ENCODE measurements at regions of chr9 and their contacts with region 1.

Region 1: DNA sequence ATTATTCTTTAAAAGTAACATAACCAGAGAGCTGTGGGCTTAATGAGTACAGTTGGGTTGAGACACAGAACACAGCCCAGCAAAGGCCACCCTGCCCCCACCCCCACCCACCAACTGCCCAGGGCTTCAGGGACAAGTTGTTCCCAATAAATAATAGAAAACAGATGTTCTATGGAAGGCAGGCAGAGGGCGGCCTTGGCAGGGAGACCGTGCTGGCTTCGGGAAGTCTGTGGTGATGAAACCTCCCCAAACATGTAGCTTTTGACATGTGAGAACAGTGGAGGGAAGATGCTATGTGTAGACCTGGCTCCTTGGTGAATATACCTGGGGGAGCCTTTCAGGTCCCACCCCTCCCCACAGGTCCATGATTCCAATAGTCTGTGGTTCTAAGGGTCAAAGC is 10.0 kb downstream of the TRAF1 start:
- DNase-seq: no peak
- ATAC-seq: no peak
- H3K4me3 Mint-ChIP-seq: peak overlapping the region; percentile 34
- H3K27ac Mint-ChIP-seq: peak overlapping the region; percentile 80
- H3K4me1 Mint-ChIP-seq: peaks cover 86% of the 10 kb centered on the region
- H3K27me3 Mint-ChIP-seq: no peaks in the 10 kb centered on the region

Region 2: DNA sequence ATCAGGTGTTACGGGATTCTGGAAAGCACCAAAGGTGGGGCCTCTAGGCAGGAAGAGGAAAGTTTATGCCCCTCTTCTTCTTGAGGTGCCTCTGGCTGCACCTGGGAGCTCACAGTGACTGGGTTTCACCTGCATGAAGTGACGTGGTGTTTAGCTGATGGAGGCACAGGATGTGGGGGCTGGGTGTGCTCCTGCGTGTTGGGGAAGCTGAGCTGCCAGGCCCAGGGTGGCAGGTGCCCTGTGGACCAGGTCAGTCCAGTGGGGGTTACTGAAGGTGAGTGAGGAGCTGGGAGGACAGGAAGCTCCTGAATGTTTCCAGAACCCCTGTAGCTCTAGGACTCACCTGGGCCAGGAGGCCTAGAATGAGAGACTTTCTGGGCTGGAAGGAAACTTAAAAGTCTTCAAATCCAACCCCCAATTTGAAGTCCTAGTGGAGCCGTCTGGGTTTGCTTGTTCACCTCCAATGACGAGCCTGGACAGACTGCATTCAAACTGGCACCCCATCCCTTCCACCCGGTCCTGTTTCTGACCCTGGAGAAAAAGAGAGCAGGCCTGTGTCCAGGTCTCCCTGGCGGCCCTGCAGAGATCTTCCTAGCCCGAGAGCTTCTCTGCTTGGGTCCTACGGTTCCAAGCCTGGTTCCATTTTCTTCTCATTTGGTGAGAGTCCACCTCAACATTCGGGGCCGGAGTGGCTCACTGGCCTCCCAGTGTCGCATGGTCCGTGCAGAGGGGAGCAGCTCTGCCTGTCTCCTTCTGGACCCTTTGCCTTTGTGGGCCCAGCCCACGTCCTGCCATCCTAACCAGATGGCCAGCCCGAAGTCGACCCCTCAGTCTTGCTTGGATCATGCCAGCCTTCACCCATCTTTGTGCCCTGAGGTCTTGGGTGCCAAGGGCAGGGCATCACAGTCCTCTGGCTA is 12.3 kb before region 1 on chr9:
- CTCF ChIA-PET with region 1: interaction called, 7 read pairs
- POLR2A ChIA-PET with region 1: interaction called, 25 read pairs
- DNase-seq: peak; percentile 69
- ATAC-seq: peak; percentile 55
- H3K4me3 Mint-ChIP-seq: no peak overlapping the region
- H3K27ac Mint-ChIP-seq: peak overlapping the region; percentile 88
- H3K4me1 Mint-ChIP-seq: peaks cover 90% of the 10 kb centered on the region
- H3K27me3 Mint-ChIP-seq: no peaks in the 10 kb centered on the region

Region 3: DNA sequence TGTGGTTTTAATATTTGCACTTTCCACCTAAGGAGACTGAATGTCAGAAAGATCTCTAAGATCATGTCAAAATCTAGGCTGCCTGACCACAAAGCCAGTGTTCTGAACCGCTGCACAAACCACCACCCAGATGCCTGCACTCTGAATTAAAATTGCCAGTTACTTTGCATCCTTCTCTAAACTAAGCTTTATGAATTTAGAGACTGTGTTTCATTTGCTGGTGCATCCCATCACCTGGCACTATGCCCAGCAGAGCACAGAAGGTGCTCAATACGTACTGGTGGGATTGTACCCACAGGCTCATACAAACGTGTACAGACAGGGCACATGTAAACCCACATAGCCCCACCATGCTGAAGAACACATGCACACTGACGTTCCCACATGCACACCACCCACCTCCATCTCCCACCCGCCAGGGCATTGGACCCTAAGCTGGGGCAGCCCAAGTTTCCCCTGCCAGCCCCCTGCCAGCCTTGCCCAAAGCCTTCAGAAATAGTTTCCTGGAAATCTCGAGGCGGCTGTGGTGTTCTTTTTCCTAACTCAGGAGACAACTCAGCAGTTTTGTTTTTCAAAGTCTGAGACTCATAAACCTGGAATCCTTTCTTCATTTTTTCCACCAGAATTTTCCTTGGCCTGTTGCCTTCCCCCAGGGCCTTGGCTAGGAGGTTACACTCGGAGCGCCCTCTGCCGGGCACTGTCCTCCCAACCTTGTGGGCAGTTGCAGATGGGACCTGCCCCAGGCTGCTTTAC is 19.6 kb after region 1 on chr9:
- CTCF ChIA-PET with region 1: interaction called, 20 read pairs
- POLR2A ChIA-PET with region 1: interaction called, 111 read pairs
- DNase-seq: peak; percentile 91
- ATAC-seq: peak; percentile 72
- H3K4me3 Mint-ChIP-seq: peak overlapping the region; percentile 15
- H3K27ac Mint-ChIP-seq: peak overlapping the region; percentile 77
- H3K4me1 Mint-ChIP-seq: peaks cover 62% of the 10 kb centered on the region
- H3K27me3 Mint-ChIP-seq: peaks cover 5% of the 10 kb centered on the region

Measured in activated CD8-positive, alpha-beta T cell treated with anti-CD3 and anti-CD28 coated beads, Interleukin-2, amount 10 ng/mL, durations not matched to agents 7 days and 5 days (primary cell).